ENCODE measurements at regions of chr1 and their contacts with region 1.

Region 1: GRCh38 chr1:15788624-15789301 is 18.7 kb downstream of the UQCRHL start:
- DNase-seq: peak; percentile 65
- H3K4me3 ChIP-seq: no peak overlapping the region
- H3K27ac ChIP-seq: no peak overlapping the region
- H3K4me1 ChIP-seq: no peaks in the 10 kb centered on the region
- H3K27me3 ChIP-seq: no peaks in the 10 kb centered on the region
- CTCF ChIP-seq: no peak

Region 2: DNA sequence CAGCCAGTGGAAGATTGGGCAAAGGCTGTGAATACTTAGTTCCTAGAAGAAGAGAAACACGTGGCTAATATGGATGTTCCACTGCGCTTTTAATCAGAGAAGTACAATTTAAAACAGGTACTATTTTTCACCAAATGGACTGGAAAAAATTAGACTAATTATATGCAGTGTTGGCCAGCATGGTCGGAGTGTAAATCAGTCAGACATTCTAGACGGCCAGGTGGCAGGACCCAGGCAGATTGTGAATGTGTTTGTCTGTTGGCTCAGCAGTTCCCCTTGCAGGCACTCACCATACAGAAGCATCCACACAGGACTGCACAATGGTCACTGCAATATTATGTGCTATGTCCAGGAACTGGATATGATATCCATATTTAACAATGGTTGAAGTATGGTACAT is 76.6 kb before region 1 on chr1:
- CTCF ChIA-PET with region 1: no interaction called
- POLR2A ChIA-PET with region 1: interaction called, 10 read pairs
- intact Hi-C with region 1: no loop called
- DNase-seq: no peak
- H3K4me3 ChIP-seq: no peak overlapping the region
- H3K27ac ChIP-seq: no peak overlapping the region
- H3K4me1 ChIP-seq: no peaks in the 10 kb centered on the region
- H3K27me3 ChIP-seq: no peaks in the 10 kb centered on the region
- CTCF ChIP-seq: no peak

Region 3: GRCh38 chr1:15809788-15810065 is 21.0 kb after region 1 on chr1:
- CTCF ChIA-PET with region 1: no interaction called
- POLR2A ChIA-PET with region 1: no interaction called
- intact Hi-C with region 1: no loop called
- DNase-seq: no peak
- H3K4me3 ChIP-seq: no peak overlapping the region
- H3K27ac ChIP-seq: no peak overlapping the region
- H3K4me1 ChIP-seq: no peaks in the 10 kb centered on the region
- H3K27me3 ChIP-seq: no peaks in the 10 kb centered on the region
- CTCF ChIP-seq: no peak

Region 4: DNA sequence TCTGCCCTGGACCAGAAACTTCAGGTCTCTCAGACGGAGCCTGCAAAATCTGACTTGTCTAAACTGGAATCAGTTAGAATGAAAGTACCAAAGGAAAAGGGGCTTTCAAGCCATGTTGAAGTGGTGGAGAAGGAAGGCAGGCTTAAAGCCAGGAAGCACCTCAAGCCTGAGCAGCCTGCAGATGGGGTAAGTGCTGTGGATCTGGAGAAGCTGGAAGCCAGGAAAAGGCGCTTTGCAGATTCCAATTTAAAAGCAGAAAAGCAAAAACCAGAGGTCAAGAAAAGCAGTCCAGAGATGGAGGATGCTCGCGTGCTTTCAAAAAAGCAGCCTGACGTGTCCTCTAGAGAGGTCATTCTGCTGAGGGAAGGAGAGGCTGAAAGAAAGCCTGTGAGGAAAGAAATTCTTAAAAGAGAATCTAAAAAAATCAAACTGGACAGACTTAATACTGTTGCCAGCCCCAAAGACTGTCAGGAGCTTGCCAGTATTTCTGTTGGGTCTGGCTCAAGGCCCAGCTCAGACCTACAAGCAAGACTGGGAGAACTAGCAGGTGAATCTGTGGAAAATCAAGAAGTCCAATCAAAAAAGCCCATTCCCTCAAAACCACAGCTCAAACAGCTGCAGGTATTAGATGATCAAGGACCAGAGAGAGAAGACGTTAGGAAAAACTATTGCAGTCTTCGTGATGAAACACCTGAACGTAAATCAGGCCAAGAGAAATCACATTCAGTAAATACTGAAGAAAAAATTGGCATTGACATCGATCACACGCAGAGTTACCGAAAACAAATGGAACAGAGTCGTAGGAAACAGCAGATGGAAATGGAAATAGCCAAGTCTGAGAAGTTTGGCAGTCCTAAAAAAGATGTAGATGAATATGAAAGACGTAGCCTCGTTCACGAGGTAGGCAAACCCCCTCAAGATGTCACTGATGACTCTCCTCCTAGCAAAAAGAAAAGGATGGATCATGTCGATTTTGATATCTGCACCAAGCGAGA is 140.5 kb after region 1 on chr1:
- CTCF ChIA-PET with region 1: no interaction called
- POLR2A ChIA-PET with region 1: no interaction called
- intact Hi-C with region 1: no loop called
- DNase-seq: no peak
- H3K4me3 ChIP-seq: no peak overlapping the region
- H3K27ac ChIP-seq: no peak overlapping the region
- H3K4me1 ChIP-seq: no peaks in the 10 kb centered on the region
- H3K27me3 ChIP-seq: no peaks in the 10 kb centered on the region
- CTCF ChIP-seq: no peak

Measured in A673 (cell line).